OCI-LY7 (cell line): ENCODE measurements at regions of chr1 and their contacts with region 1.

Region 1: DNA sequence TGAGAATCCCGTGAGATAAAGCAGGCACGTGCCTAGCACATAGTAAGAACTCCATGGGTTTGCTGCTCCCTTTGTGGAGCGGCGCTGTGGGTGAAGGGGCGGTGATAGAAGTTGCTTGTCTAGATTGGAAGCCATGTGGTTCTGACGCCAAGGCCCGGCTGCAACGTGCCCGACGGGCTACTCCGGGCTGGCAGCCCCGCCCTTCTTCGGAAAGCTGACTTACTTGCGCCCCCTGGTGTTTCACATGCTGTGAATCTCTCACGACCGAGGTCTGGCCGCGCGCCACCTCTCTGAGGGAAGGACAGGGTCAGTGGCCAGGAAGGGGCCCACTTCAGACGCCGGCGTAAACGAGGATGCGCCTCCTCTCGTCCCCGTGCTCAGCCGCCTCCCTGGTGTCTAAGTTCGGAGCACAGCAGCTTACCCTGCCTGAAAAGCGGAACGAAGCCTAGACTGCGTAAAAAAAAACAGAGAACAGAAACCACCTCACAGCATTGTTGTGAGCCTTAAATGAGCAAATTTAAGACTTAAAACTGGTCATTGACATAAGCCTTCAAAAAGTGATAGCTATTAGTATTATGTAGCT is 42.6 kb upstream of the WNT2B start:
- DNase-seq: peak; percentile 92
- H3K4me3 ChIP-seq: peak overlapping the region; percentile 41
- H3K27ac ChIP-seq: peak overlapping the region; percentile 64
- H3K4me1 ChIP-seq: peaks cover 43% of the 10 kb centered on the region
- CTCF ChIP-seq: peak; percentile 89

Region 2: GRCh38 chr1:112508278-112509004 is 42.3 kb after region 1 on chr1 and contains the start of gene WNT2B:
- CTCF ChIA-PET with region 1: interaction called, 5 read pairs
- POLR2A ChIA-PET with region 1: interaction called, 3 read pairs
- intact Hi-C with region 1: loop called (anchors 2 kb)
- DNase-seq: peak; percentile 55
- H3K4me3 ChIP-seq: peak within 1 kb of the TSS; percentile 68
- H3K27ac ChIP-seq: no peak within 1 kb of the TSS
- H3K4me1 ChIP-seq: peaks cover 42% of the 10 kb centered on the region
- CTCF ChIP-seq: no peak
- total RNA-seq, gene WNT2B: 0.32 and 0.39 TPM in 2 replicates

Region 3: GRCh38 chr1:112614460-112615065 is 148.4 kb after region 1 on chr1:
- CTCF ChIA-PET with region 1: no interaction called
- POLR2A ChIA-PET with region 1: interaction called, 4 read pairs
- intact Hi-C with region 1: loop called (anchors 1 kb)
- DNase-seq: peak; percentile 54
- H3K4me3 ChIP-seq: no peak overlapping the region
- H3K27ac ChIP-seq: no peak overlapping the region
- H3K4me1 ChIP-seq: peaks cover 12% of the 10 kb centered on the region
- CTCF ChIP-seq: peak; percentile 84

Region 4: GRCh38 chr1:112706908-112707663 is 240.9 kb after region 1 on chr1 and contains the start of gene RHOC:
- CTCF ChIA-PET with region 1: no interaction called
- POLR2A ChIA-PET with region 1: interaction called, 3 read pairs
- intact Hi-C with region 1: loop called (anchors 2 kb)
- DNase-seq: peak; percentile 79
- H3K4me3 ChIP-seq: peak within 1 kb of the TSS; percentile 66
- H3K27ac ChIP-seq: no peak within 1 kb of the TSS
- H3K4me1 ChIP-seq: peaks cover 33% of the 10 kb centered on the region
- CTCF ChIP-seq: peak; percentile 86
- total RNA-seq, gene RHOC: 23.1 and 34.9 TPM in 2 replicates

Region 5: GRCh38 chr1:112715264-112716053 is 249.3 kb after region 1 on chr1 and contains the start of gene PPM1J:
- CTCF ChIA-PET with region 1: no interaction called
- POLR2A ChIA-PET with region 1: no interaction called
- intact Hi-C with region 1: loop called (anchors 2 kb)
- DNase-seq: peak; percentile 94
- H3K4me3 ChIP-seq: peak within 1 kb of the TSS; percentile 78
- H3K27ac ChIP-seq: no peak within 1 kb of the TSS
- H3K4me1 ChIP-seq: peaks cover 20% of the 10 kb centered on the region
- CTCF ChIP-seq: no peak
- total RNA-seq, gene PPM1J: 1.4 and 1.5 TPM in 2 replicates